ENCODE measurements at regions of chr13 and their contacts with region 1.

Region 1: GRCh38 chr13:21625366-21625765 is 21.4 kb upstream of the MICU2 start:
- DNase-seq: peak; percentile 65
- H3K4me3 Mint-ChIP-seq: no peak overlapping the region
- H3K27ac Mint-ChIP-seq: no peak overlapping the region
- H3K4me1 Mint-ChIP-seq: peaks cover 7% of the 10 kb centered on the region
- H3K27me3 Mint-ChIP-seq: no peaks in the 10 kb centered on the region
- CTCF ChIP-seq: no peak

Region 2: DNA sequence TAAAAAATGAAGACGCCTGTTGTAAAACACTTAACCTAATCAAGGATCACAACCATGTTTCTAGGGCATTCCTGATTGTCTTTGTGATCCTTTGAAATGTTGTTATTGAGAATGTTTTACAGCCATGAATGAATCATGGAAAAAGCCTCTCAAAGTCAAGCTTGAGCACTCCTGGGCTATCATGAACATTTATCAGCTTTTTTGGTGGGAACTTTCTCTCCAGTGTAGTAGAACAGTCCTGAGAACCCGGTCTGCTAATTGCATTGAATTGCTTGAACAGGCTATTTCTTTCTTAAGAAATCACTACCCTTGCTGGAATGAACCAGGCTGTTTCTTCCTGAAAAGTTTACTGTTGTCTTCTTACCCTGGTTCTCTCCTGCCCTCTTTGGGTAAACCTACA is 562.0 kb after region 1 on chr13:
- CTCF ChIA-PET with region 1: no interaction called
- POLR2A ChIA-PET with region 1: no interaction called
- intact Hi-C with region 1: loop called (anchors 5 kb)
- DNase-seq: no peak
- H3K4me3 Mint-ChIP-seq: no peak overlapping the region
- H3K27ac Mint-ChIP-seq: no peak overlapping the region
- H3K4me1 Mint-ChIP-seq: no peaks in the 10 kb centered on the region
- H3K27me3 Mint-ChIP-seq: no peaks in the 10 kb centered on the region
- CTCF ChIP-seq: no peak